ENCODE measurements at regions of chr15 and their contacts with region 1.

Region 1: GRCh38 chr15:78308422-78309032 is 9.1 kb upstream of the SKIC8 start:
- DNase-seq: peak; percentile 69 to 82 (median 79)
- H3K4me3 ChIP-seq: no peak overlapping the region
- H3K27ac ChIP-seq: no peak overlapping the region
- H3K4me1 ChIP-seq: peaks cover 0 to 9% (median 7%) of the 10 kb centered on the region in 4 experiments
- H3K27me3 ChIP-seq: peaks cover 0 to 2% (median 0%) of the 10 kb centered on the region in 5 experiments

Region 2: GRCh38 chr15:78264304-78265136 is 44.0 kb before region 1 on chr15 and contains the start of gene DNAJA4:
- CTCF ChIA-PET with region 1: no interaction called
- POLR2A ChIA-PET with region 1: no interaction called
- DNase-seq: peak; percentile 73 to 83 (median 78)
- H3K4me3 ChIP-seq: peak within 1 kb of the TSS; percentile 37 to 81 (median 66)
- H3K27ac ChIP-seq: no peak within 1 kb of the TSS
- H3K4me1 ChIP-seq: peaks cover 0 to 13% (median 8%) of the 10 kb centered on the region in 4 experiments
- H3K27me3 ChIP-seq: peaks cover 0 to 5% (median 0%) of the 10 kb centered on the region in 5 experiments

Region 3: GRCh38 chr15:78415286-78415685 is 106.8 kb after region 1 on chr15:
- CTCF ChIA-PET with region 1: interaction called, 43 read pairs
- POLR2A ChIA-PET with region 1: no interaction called
- DNase-seq: peak in 2 of 3 donors; percentile 35 to 45
- H3K4me3 ChIP-seq: no peak overlapping the region
- H3K27ac ChIP-seq: no peak overlapping the region
- H3K4me1 ChIP-seq: peaks cover 0 to 12% (median 5%) of the 10 kb centered on the region in 4 experiments
- H3K27me3 ChIP-seq: no peaks in the 10 kb centered on the region

Region 4: DNA sequence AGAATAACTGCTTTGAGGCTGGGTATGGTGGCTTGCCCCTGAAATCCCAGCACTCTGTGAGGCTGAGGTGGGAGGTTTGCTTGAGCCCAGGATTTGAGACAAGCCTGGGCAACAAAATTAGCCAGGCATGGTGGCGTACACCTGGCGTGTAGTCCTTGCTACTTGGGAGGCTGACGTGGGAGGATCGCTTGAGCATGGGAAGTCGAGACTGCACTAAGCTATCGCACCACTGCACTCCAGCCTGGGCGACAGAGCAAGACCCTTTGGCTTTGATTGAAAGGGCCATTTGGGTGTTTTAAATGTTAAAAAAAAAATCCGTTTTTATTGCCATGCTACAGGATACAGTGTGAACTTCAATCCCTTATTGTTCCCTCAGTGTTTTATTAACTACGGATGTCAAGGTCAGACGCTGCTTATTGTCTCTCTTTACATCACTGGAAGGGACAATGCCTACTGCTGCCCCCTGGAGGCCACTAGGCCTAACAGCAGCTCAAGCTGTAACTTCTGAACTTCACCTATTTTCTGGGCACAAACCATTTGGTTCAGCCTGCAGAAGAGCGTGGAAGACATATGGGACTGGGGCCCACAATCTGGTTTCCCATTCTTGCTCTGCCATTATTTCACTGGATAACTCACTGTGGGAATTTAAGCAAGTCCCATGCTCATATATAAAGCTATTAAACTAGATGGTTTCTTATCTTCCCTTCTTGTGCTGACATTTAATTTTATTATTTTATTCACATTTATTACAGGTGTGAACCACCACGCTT is 114.2 kb after region 1 on chr15:
- CTCF ChIA-PET with region 1: interaction called, 43 read pairs
- POLR2A ChIA-PET with region 1: no interaction called
- DNase-seq: peak; percentile 64 to 78 (median 73)
- H3K4me3 ChIP-seq: no peak overlapping the region
- H3K27ac ChIP-seq: no peak overlapping the region
- H3K4me1 ChIP-seq: peaks cover 13 to 52% (median 37%) of the 10 kb centered on the region in 4 experiments
- H3K27me3 ChIP-seq: no peaks in the 10 kb centered on the region

Region 5: GRCh38 chr15:78481917-78482316 is 173.4 kb after region 1 on chr15:
- CTCF ChIA-PET with region 1: interaction called, 63 read pairs
- POLR2A ChIA-PET with region 1: no interaction called
- DNase-seq: no peak
- H3K4me3 ChIP-seq: no peak overlapping the region
- H3K27ac ChIP-seq: no peak overlapping the region
- H3K4me1 ChIP-seq: no peaks in the 10 kb centered on the region
- H3K27me3 ChIP-seq: no peaks in the 10 kb centered on the region